ENCODE measurements at regions of chr7 and their contacts with region 1.

Region 1: GRCh38 chr7:21261627-21262594 is 166.0 kb upstream of the SP4 start:
- DNase-seq: peak; percentile 29

Region 2: GRCh38 chr7:20798081-20798693 is 463.7 kb before region 1 on chr7:
- in situ Hi-C with region 1: loop called (anchors 25 kb)
- DNase-seq: peak; percentile 92